ENCODE measurements at regions of chr9 and their contacts with region 1.

Region 1: DNA sequence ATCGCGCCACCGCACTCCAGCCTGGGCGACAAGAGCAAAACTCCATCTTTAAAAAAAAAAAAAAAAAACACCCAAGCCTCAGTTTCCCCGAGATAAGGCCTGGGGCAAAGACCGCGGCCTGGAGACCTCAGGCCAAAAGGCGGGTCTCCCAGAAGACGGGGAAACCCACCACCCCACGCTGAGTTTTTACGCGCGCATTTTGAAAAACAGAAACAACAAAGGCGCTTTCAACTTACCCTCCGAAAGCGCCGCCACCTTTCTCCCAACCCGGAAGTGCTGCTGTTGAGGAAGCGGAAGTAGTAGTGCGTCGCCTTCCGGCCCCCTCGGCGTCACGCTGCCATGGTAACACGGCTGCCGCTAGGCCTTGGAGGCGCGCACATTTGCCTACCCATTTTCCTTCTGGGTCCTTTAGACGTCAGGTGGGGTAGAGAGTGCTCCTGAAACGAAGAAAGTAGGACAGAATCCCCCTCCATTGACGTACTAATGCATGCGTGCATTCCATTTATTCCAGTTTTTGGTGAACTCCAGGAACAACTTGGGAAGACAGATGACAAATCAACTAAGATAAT is at the start of gene TTF1:
- DNase-seq: peak; percentile 82 to 87
- H3K4me3 ChIP-seq: peak within 1 kb of the TSS; percentile 60
- H3K27ac ChIP-seq: no peak within 1 kb of the TSS
- H3K4me1 ChIP-seq: peaks cover 12% of the 10 kb centered on the region; the same call in 1 of the 2 replicates
- H3K27me3 ChIP-seq: peaks cover 22% of the 10 kb centered on the region
- CTCF ChIP-seq: no peak
- total RNA-seq, gene TTF1: 16.0 and 18.5 TPM in 2 replicates

Region 2: GRCh38 chr9:132354637-132355355 is 51.8 kb before region 1 on chr9 and contains the start of gene SETX:
- CTCF ChIA-PET with region 1: no interaction called
- POLR2A ChIA-PET with region 1: no interaction called
- intact Hi-C with region 1: loop called (anchors 2 kb)
- DNase-seq: peak; percentile 87 to 98
- H3K4me3 ChIP-seq: peak within 1 kb of the TSS; percentile 86
- H3K27ac ChIP-seq: peak within 1 kb of the TSS; percentile 58
- H3K4me1 ChIP-seq: peaks cover 9% of the 10 kb centered on the region
- H3K27me3 ChIP-seq: no peaks in the 10 kb centered on the region
- CTCF ChIP-seq: no peak
- total RNA-seq, gene SETX: 21.2 and 23.5 TPM in 2 replicates

Region 3: DNA sequence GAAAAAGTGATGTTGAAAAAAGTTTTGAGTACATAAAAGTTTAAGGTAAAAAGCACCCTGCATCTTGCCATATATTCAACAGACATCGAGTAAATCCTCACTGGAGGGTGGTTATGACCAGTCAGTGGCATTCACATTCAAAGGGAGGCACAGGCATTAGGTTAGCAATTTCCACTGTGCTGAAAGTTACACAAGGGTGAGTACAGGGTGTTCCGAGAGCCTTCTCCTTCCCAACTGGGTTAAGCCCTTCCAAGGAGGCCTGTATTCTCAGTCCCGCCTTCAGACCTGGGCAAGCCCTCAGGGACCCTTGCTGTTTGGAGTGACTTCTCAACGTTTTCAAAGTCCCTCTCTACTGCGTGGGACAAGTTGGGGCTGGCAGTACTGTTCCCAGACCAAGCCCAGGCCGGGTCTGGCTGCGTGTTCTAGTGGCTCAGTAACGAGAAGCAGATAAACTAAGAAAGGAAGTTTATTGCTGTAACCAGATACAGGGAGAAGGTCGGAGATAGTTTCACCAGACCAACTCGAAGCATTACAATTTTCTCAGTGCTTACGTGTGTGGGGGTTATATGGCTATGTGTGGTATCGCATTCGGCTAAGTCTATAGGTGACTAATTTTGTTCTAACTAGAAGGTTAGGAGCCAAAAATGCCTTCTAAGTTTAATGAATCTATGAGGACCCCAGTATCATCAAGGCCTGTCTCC is 38.9 kb before region 1 on chr9:
- CTCF ChIA-PET with region 1: no interaction called
- POLR2A ChIA-PET with region 1: no interaction called
- intact Hi-C with region 1: no loop called
- DNase-seq: no peak
- H3K4me3 ChIP-seq: no peak overlapping the region
- H3K27ac ChIP-seq: no peak overlapping the region
- H3K4me1 ChIP-seq: no peaks in the 10 kb centered on the region
- H3K27me3 ChIP-seq: no peaks in the 10 kb centered on the region
- CTCF ChIP-seq: no peak

Region 4: GRCh38 chr9:132575005-132575609 is 168.5 kb after region 1 on chr9:
- CTCF ChIA-PET with region 1: no interaction called
- POLR2A ChIA-PET with region 1: no interaction called
- intact Hi-C with region 1: loop called (anchors 1 kb)
- DNase-seq: peak; percentile 53 to 75
- H3K4me3 ChIP-seq: no peak overlapping the region
- H3K27ac ChIP-seq: no peak overlapping the region
- H3K4me1 ChIP-seq: no peaks in the 10 kb centered on the region
- H3K27me3 ChIP-seq: peaks cover 78% of the 10 kb centered on the region
- CTCF ChIP-seq: peak; percentile 82

Region 5: GRCh38 chr9:132800038-132800648 is 393.5 kb after region 1 on chr9:
- CTCF ChIA-PET with region 1: no interaction called
- POLR2A ChIA-PET with region 1: no interaction called
- intact Hi-C with region 1: loop called (anchors 1 kb)
- DNase-seq: peak; percentile 58 to 68
- H3K4me3 ChIP-seq: no peak overlapping the region
- H3K27ac ChIP-seq: no peak overlapping the region
- H3K4me1 ChIP-seq: no peaks in the 10 kb centered on the region
- H3K27me3 ChIP-seq: peaks cover 13% of the 10 kb centered on the region
- CTCF ChIP-seq: peak; percentile 92

Region 6: DNA sequence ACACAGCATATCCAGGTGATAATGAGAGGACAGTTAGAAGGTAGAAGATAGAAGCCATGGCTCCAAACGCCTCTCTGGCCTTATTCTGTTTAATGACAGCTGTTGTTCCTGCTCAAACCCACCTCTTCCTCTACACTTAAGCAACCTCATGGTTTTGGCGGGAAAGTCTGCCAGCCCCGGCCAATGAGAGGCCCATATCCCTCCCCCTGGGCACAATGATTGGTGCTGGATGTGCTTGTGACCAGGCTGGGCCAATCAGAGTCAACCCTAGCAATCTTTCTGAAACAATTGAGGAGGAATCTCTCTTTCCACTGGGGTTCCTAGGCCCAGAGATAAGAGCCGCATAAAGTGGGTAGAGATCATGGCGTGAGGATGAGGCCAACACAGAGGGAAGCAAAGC is 567.1 kb after region 1 on chr9:
- CTCF ChIA-PET with region 1: no interaction called
- POLR2A ChIA-PET with region 1: no interaction called
- intact Hi-C with region 1: loop called (anchors 1 kb)
- DNase-seq: no peak
- H3K4me3 ChIP-seq: no peak overlapping the region
- H3K27ac ChIP-seq: no peak overlapping the region
- H3K4me1 ChIP-seq: no peaks in the 10 kb centered on the region
- H3K27me3 ChIP-seq: peaks cover 56% of the 10 kb centered on the region
- CTCF ChIP-seq: no peak

Region 7: DNA sequence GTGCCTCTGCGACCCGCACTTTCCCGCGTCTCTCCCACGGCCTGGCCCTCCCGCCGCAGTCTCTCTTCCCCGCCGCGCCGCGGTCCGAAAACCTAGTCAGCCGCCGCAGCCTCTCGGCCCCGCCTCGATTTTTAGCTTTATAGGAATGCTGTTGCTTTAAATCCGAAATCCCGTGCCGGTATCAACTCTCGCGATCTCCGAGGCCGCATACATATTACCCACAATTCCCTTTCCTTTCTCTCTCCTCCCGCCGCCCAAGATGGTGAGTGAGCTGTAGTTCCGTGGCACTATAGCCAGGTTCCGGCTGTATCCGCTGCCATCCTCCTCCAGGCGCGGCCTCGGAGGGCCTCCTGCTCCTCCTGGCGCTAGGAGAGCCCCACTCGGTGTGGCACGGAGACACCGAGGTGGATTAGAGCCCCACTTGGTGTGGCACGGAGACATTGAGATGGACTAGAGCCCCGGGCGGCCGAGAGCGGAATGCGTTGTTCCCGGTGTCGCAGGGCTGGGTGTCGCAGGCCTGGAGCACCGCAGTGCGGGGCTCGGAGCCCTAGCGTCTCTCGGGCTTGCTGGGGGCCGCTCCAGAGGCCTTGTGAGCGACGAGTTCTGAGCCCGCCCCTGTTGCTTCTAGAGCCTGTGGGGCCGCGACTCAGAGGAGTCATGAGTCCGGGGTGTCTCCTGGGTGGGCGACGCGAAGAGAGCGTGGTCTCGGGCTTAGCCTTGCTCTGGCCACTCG is 941.5 kb after region 1 on chr9 and contains the starts of genes MED22 and RPL7A:
- CTCF ChIA-PET with region 1: no interaction called
- POLR2A ChIA-PET with region 1: interaction called, 19 read pairs
- intact Hi-C with region 1: no loop called
- DNase-seq: peak; percentile 87 to 93
- H3K4me3 ChIP-seq: peak within 1 kb of the TSS; percentile 99
- H3K27ac ChIP-seq: peak within 1 kb of the TSS; percentile 97
- H3K4me1 ChIP-seq: peaks cover 17% of the 10 kb centered on the region
- H3K27me3 ChIP-seq: no peaks in the 10 kb centered on the region
- CTCF ChIP-seq: 0 out of 2 replicates have a peak, but pooled peaks have one; percentile 17
- total RNA-seq, gene MED22: 38.2 and 38.7 TPM in 2 replicates
- total RNA-seq, gene RPL7A: 2,381 and 2,937 TPM in 2 replicates